Heart left ventricle (tissue), 16 donors: ENCODE measurements at regions of chr2 and their contacts with region 1.

Region 1: DNA sequence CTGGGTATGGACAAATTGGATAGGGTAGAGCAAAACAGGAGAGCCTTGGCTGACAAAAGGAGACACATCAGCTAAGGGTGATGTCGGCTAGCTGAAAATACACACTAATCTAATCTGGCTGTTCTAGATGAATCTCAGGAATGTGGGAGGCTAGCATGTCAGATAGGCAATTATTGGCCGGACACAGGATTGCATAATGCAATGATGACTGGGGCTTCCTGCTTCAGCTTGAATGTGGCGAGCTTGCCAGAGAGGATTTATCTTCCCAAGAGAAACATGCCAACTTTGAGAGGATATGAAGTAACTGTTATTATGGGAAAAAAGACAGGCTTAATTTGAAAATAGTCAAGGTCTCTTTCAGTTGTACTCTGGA is 102.4 kb downstream of the TRIB2 start:
- DNase-seq: peak in 4 of 5 donors; percentile 87 to 90 (median 88)
- ATAC-seq: peak; percentile 97 to 98 (median 98)
- H3K4me3 ChIP-seq: peak overlapping the region in 1 of 12 donors; percentile 3
- H3K27ac ChIP-seq: peak overlapping the region; percentile 70 to 95 (median 89)
- H3K4me1 ChIP-seq: peaks cover 7 to 61% (median 45%) of the 10 kb centered on the region in 12 donors
- H3K27me3 ChIP-seq: no peaks in the 10 kb centered on the region
- CTCF ChIP-seq: no peak
- POLR2A ChIP-seq: peak in 1 of 2 donors; percentile 45

Region 2: DNA sequence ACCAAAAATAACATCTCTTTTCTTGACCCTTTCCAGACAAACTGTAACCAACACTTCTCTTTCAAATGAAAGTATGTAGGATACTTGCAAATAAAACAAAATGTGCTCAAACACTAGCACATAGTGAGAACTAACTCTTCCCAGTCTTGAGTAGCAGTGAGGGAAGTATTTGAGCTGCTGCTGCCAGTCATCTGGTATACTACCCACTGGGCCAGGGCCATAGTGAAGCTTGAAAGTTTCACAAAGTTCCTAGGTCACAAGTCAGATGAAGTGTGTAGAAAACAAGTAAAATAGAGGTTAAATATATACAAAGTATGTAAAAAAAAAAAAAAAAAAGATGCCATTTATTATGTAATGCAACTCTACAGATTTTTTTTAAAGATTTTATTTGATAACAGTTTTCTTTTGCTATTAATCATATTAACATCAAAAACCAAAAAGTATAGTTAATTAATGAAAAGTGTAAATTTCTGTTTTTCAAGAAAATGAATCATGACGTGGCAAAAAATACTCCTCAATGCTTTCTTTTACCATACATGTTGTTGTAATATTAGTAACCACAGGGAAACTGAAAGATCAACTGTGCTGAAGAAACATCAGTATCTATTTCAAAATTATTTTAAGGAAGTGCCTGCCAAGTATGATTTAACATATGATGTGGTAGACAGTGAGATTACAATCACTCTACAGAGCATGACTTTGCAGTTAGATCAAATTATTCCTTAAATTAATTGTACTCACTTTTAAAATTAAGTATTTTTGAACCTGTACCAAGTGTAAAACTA is 123.9 kb before region 1 on chr2:
- intact Hi-C with region 1: no loop called
- DNase-seq: no peak
- ATAC-seq: no peak
- H3K4me3 ChIP-seq: no peak overlapping the region
- H3K27ac ChIP-seq: no peak overlapping the region
- H3K4me1 ChIP-seq: no peaks in the 10 kb centered on the region
- H3K27me3 ChIP-seq: no peaks in the 10 kb centered on the region
- CTCF ChIP-seq: no peak
- POLR2A ChIP-seq: no peak

Region 3: GRCh38 chr2:12728221-12728777 is 90.8 kb before region 1 on chr2:
- intact Hi-C with region 1: loop called in 4 of 10 experiments (anchors 5 to 10 kb)
- DNase-seq: no peak
- ATAC-seq: no peak
- H3K4me3 ChIP-seq: no peak overlapping the region
- H3K27ac ChIP-seq: peak overlapping the region in 5 of 12 donors; percentile 10 to 96 (median 73)
- H3K4me1 ChIP-seq: peaks cover 24 to 100% (median 95%) of the 10 kb centered on the region in 12 donors
- H3K27me3 ChIP-seq: no peaks in the 10 kb centered on the region
- CTCF ChIP-seq: no peak
- POLR2A ChIP-seq: no peak